Left colon (tissue), 2 donors: ENCODE measurements at regions of chr1 and their contacts with region 1.

Region 1: DNA sequence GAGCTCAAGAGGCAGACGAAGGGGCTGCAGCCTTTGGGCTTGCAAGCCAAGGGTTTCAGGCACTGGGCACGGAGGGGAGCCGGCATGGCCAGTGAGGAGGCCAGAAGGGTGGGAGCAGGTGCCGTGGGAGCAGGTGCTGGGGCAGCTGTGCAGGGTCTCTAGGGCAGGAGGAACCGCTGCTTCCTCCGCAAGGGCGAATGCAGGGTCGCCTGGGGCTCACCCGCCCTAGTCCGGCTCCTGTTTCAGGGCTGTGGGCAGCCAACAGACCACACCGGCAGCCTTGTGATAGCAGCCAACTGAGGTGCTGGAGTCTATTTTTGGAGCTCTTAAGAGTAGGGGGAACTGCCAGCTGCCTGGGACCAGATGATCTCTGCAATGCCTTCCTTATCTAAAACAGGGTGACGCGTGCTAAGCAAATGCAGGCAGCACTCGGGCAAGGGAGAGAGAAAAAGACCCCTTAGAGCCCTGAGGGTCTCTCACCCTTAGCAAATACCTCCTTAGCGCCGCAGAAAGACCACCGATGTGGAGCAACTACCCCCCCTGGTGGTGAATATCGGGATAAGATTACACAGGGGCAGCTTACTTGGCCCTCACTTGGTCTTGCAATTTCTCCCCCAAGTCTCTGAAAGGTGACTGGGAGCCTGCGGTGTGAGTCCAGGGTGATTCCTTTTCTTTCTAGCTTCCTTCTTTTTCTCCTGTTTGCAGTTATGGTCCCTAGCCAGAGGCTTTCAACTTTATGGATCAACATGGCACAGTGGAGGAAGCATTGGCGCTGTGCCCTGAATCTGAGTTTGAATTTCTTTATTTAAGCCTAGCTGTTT is 20.7 kb upstream of the MAPKAPK2 start:
- DNase-seq: peak in 1 of 2 donors; percentile 61
- ATAC-seq: peak; percentile 38

Region 2: DNA sequence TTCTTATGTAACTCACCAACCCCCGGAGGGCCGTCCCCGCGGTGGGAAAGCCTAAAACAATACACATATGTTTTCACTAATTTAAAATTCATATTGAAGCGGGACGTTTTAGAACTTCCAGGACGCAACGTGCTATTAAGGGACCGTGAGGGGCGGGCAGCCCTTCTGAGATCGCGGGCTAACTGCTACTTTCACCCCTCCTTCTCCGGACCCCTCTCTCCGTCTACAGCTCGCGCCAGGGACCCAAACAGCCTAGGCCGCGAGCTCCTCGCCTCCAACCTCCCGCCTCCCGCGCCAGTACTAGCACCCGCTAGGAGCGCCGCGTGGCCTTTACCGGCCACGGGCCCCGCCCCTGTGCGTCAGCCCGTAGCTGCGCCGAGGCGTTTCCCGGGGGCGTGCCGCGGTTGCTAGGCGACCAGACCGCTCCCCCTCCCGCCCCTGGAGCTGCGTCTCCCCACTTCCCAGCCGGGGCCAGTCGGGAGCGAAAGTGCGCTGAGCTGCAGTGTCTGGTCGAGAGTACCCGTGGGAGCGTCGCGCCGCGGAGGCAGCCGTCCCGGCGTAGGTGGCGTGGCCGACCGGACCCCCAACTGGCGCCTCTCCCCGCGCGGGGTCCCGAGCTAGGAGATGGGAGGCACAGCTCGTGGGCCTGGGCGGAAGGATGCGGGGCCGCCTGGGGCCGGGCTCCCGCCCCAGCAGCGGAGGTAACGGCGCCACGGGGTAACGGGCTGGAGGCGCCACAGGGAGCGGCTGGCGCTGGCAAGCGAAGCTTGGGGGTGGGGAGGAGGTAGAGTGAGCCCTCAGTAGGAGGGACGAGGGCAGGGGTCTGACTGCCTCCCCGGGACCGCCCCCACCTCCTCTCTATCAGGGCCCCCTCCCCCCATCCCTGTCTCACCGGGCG is 28.7 kb before region 1 on chr1 and contains the start of gene DYRK3:
- intact Hi-C with region 1: loop called in 1 of 2 experiments (anchors 2 kb)
- DNase-seq: peak; percentile 94 to 96
- ATAC-seq: peak; percentile 100
- total RNA-seq, gene DYRK3: 0.58 to 1.2 TPM

Region 3: DNA sequence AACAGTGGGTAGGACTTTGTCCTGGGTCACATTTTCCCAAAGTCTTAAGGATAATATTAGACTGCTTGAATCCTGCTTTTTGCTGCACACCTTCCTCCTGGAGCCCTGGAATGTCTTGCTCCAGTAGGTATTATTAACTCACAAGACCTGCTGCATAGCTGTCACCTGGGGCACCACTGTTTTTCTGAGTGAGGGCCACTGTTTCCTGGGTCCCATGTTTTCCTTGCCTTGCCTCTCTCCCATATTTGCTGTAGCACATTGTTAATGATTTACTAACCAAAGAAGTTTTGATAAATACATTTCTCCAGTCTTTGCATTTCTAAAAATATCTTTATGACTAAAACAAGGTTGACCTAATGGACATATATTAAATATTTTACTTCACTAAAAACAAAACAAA is 328.7 kb after region 1 on chr1:
- intact Hi-C with region 1: no loop called
- DNase-seq: no peak
- ATAC-seq: peak; percentile 49